SK-N-SH (cell line): ENCODE measurements at regions of chr2 and their contacts with region 1.

Region 1: GRCh38 chr2:148509288-148509902 is 135.2 kb upstream of the EPC2 start:
- DNase-seq: peak; percentile 77
- H3K4me3 ChIP-seq: peak overlapping the region; percentile 43 to 53; a peak in 3 of 4 replicates
- H3K27ac ChIP-seq: no peak overlapping the region
- H3K4me1 ChIP-seq: peaks cover 0 to 6% of the 10 kb centered on the region in 2 experiments; a peak in 2 of 4 replicates
- H3K27me3 ChIP-seq: no peaks in the 10 kb centered on the region
- CTCF ChIP-seq: peak; percentile 93
- EP300 ChIP-seq: no peak
- RAD21 ChIP-seq: peak; percentile 96

Region 2: DNA sequence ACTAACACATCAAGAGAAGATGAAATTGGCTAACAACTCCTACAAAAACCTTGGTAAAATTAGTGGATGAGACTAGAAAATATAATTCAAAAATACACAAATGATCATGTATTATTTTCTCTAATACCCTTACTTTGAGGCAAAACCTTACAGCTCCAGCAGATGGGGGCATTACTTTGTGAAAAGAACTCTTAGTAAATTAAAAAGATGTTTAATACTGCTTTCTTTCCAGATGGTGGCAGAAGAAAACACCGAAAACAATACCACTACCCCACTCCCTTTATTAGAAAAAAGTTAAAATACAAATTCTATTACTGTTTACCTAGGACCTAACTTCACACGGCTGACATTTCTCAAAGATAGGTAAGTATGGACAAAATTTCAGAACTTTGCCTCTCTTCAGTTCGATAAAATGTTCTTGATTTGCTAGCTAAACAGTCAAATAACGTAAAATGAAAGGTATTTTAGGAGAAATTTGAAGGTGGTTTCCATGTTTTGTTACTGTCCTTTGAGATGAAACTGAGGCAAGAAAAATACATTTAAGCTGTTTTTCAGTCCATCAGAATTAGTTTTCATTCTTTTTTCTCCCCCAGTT is 519.5 kb before region 1 on chr2:
- CTCF ChIA-PET with region 1: interaction called, 46 read pairs
- POLR2A ChIA-PET with region 1: no interaction called
- DNase-seq: peak; percentile 39
- H3K4me3 ChIP-seq: no peak overlapping the region
- H3K27ac ChIP-seq: no peak overlapping the region
- H3K4me1 ChIP-seq: no peaks in the 10 kb centered on the region
- H3K27me3 ChIP-seq: no peaks in the 10 kb centered on the region
- CTCF ChIP-seq: peak; percentile 92
- EP300 ChIP-seq: no peak
- RAD21 ChIP-seq: peak; percentile 89

Region 3: DNA sequence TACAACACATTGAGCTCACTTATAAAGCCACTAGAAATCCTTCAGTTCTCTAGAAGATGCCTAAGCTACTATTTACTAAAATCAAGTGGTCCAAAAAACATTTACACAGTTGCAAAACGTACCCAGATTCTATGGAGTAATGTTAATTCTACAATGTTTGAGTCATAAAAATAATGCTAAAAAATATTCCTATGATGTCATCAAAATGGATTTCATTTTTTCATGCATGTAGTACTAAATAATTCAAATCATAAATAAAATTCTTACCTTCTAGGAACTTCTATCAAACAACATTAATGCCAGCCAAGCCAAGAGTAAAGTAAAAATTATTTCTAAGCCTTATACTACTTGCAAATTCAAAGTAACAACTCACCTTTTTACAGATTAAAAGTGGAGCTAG is 33.8 kb before region 1 on chr2:
- CTCF ChIA-PET with region 1: interaction called, 10 read pairs
- POLR2A ChIA-PET with region 1: no interaction called
- DNase-seq: no peak
- H3K4me3 ChIP-seq: no peak overlapping the region
- H3K27ac ChIP-seq: no peak overlapping the region
- H3K4me1 ChIP-seq: no peaks in the 10 kb centered on the region
- H3K27me3 ChIP-seq: no peaks in the 10 kb centered on the region
- CTCF ChIP-seq: no peak
- EP300 ChIP-seq: no peak
- RAD21 ChIP-seq: no peak

Region 4: DNA sequence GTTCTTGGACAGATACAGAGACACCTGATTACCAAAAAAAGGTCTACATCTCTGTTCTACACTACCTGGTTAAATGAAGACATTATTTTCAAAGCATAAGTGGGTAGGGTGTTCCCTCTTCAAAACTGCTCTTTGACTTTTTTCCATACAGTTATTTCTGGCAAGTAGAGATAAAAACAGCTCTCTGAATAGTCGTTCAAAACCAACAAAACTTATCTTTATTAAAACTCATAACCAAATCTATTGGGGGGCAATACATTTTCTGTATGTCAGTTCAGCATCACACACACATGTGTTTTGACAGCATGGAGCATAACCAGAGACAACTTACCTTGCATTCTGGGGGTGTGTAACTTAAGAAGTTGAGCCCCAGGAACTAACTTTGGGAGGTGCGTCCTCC is 13.8 kb before region 1 on chr2:
- CTCF ChIA-PET with region 1: interaction called, 15 read pairs
- POLR2A ChIA-PET with region 1: no interaction called
- DNase-seq: no peak
- H3K4me3 ChIP-seq: no peak overlapping the region
- H3K27ac ChIP-seq: no peak overlapping the region
- H3K4me1 ChIP-seq: peaks cover 0 to 10% of the 10 kb centered on the region in 2 experiments; a peak in 3 of 4 replicates
- H3K27me3 ChIP-seq: no peaks in the 10 kb centered on the region
- CTCF ChIP-seq: no peak
- EP300 ChIP-seq: no peak
- RAD21 ChIP-seq: no peak

Region 5: DNA sequence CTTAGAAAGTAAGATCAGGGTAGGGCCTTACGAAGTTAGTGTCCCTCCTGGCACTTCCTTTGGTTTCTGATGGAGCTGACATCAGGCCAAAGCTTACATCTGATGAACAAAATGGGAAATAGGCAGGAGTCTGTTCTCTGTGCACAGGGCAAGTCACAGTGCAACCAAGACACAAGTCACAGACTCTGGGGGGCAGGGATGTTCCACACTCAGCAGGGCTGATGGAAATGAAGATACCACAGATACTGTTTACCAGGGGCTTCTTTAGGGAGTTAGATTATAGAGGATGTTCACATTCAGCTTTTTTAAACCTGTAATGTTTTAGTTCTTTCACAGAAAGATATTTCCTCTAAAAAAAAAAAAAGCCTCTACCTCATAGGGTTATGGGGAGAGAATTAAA is 29.0 kb after region 1 on chr2:
- CTCF ChIA-PET with region 1: interaction called, 12 read pairs
- POLR2A ChIA-PET with region 1: no interaction called
- DNase-seq: peak; percentile 28
- H3K4me3 ChIP-seq: no peak overlapping the region
- H3K27ac ChIP-seq: no peak overlapping the region
- H3K4me1 ChIP-seq: peaks cover 0 to 7% of the 10 kb centered on the region in 2 experiments; a peak in 1 of 4 replicates
- H3K27me3 ChIP-seq: no peaks in the 10 kb centered on the region; the same call in 1 of the 2 replicates
- CTCF ChIP-seq: no peak
- EP300 ChIP-seq: no peak
- RAD21 ChIP-seq: peak; percentile 23

Region 6: GRCh38 chr2:148582679-148583511 is 73.5 kb after region 1 on chr2:
- CTCF ChIA-PET with region 1: no interaction called
- POLR2A ChIA-PET with region 1: no interaction called
- DNase-seq: no peak
- H3K4me3 ChIP-seq: no peak overlapping the region
- H3K27ac ChIP-seq: no peak overlapping the region
- H3K4me1 ChIP-seq: no peaks in the 10 kb centered on the region
- H3K27me3 ChIP-seq: peaks cover 13% of the 10 kb centered on the region; the same call in 1 of the 2 replicates
- CTCF ChIP-seq: no peak
- EP300 ChIP-seq: no peak
- RAD21 ChIP-seq: no peak

Region 7: DNA sequence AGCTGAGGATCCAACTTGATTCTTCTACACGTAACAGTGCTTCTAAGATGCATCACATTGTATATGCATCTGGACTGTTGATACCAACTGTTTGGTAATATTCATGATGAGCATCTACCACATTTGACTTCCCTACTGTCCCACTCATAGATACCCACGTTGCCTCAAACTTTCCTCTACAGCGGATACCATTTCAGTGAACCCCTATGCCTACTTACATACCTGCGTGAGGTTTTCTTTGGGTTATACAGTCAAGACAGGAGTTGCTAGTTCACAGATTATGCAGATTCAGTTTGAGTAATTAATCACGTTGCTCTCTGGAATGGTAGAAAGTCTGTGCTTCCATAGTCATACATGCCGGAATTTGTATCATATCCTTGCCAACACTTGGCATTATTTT is 175.1 kb after region 1 on chr2:
- CTCF ChIA-PET with region 1: no interaction called
- POLR2A ChIA-PET with region 1: no interaction called
- DNase-seq: no peak
- H3K4me3 ChIP-seq: no peak overlapping the region
- H3K27ac ChIP-seq: no peak overlapping the region
- H3K4me1 ChIP-seq: no peaks in the 10 kb centered on the region
- H3K27me3 ChIP-seq: no peaks in the 10 kb centered on the region
- CTCF ChIP-seq: no peak
- EP300 ChIP-seq: no peak
- RAD21 ChIP-seq: no peak